A673 (cell line): ENCODE measurements at regions of chr5 and their contacts with region 1.

Region 1: DNA sequence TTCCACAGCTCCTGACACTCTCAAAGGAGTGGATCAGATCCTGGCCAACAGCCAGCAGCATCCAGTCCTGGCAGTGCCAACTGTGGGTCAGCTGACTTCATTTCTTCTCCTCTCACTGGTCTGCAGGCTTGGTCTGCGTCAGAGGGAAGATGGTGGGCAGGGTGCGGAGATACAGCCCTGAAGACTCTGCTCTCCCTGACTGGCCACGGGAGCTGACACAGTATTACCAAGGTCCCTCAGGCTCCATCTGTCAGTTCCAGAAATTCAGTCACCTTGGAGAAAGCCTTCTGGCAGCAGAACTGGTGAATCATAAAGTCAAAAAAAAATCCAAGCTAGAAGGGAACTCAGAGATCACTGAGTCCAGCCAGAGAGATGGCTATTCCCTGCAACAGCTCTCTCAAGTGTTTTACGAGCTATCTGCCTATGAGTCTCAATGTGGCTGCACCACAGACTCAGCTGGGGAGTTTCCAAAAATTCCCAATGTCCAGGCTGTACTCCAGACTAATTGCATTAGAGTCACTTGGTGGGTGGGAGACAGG is 28.0 kb downstream of the C1QTNF2 start:
- DNase-seq: no peak
- H3K4me3 ChIP-seq: no peak overlapping the region
- H3K27ac ChIP-seq: no peak overlapping the region
- H3K4me1 ChIP-seq: peaks cover 4% of the 10 kb centered on the region
- H3K27me3 ChIP-seq: no peaks in the 10 kb centered on the region
- CTCF ChIP-seq: no peak

Region 2: GRCh38 chr5:160021831-160022446 is 320.5 kb before region 1 on chr5:
- CTCF ChIA-PET with region 1: interaction called, 22 read pairs
- POLR2A ChIA-PET with region 1: no interaction called
- intact Hi-C with region 1: loop called (anchors 1 kb)
- DNase-seq: peak; percentile 74
- H3K4me3 ChIP-seq: no peak overlapping the region
- H3K27ac ChIP-seq: no peak overlapping the region
- H3K4me1 ChIP-seq: peaks cover 31% of the 10 kb centered on the region
- H3K27me3 ChIP-seq: no peaks in the 10 kb centered on the region
- CTCF ChIP-seq: peak; percentile 75

Region 3: DNA sequence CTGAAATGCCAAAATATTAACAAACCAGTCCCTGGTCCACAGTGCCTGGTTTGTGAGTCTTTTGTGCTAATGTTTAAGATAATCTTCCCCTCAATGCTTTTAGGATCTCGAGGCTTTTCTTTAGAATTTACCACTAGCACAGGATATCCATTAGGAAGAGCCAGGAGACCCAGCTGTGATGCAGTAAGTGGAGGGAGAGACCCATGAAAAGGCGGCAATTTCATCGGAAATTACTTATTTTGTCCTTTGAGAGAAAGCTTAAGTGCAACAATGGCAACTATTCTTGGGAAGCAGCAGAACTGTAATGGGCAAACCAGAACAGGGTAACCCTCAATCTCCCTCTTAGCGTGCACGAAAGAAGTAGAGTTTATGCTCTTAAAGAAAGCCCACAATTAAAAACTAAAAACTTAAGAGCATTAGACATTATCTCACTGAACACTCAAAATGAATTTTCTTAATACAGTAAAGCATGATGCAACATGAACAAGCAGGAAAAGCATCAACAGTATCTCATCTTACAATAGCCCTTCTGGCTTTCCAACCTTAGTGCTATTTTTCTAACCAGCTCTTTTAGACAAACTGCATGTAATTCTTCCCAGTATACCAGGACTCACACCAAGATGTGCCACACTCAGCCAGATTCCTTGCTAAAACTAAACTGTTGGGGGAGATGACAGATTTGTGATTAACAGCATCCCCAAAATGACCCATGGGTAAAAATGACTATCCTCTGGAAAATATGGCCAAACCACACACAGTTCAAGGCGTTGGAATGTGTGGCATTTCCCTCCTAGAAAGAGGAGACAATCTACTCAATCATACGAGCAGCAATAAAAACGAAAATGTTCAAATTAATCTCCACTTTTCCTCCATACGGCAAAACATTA is 259.6 kb before region 1 on chr5:
- CTCF ChIA-PET with region 1: interaction called, 11 read pairs
- POLR2A ChIA-PET with region 1: no interaction called
- intact Hi-C with region 1: loop called (anchors 1 kb)
- DNase-seq: peak; percentile 32
- H3K4me3 ChIP-seq: no peak overlapping the region
- H3K27ac ChIP-seq: peak overlapping the region; percentile 69
- H3K4me1 ChIP-seq: peaks cover 15% of the 10 kb centered on the region
- H3K27me3 ChIP-seq: no peaks in the 10 kb centered on the region
- CTCF ChIP-seq: no peak

Region 4: DNA sequence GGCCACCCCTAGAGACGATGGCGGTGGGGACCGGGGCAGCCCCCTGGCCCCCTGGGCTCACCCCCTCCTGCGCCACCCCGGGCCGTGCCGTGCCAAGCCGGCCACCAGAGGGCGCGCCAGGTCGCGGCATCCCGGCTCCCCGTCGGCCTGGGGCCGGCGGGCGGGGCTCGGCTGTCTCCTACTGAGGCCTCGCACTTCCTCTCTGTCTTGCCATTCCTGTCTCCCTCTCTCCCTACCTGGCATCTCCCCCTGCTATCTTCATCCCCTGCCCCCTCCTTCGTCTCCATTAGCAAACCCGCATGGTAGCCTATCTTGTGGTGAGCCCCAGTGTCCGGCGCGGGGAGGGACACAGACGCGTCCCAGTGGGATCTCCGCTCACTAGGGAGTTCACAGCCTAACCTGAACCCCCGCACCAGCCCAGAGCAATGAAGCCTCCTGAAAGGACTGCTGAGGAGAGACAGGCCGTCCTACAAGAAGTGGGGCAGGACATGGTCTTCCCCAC is 143.0 kb before region 1 on chr5:
- CTCF ChIA-PET with region 1: no interaction called
- POLR2A ChIA-PET with region 1: interaction called, 7 read pairs
- intact Hi-C with region 1: loop called (anchors 1 kb)
- DNase-seq: peak; percentile 65
- H3K4me3 ChIP-seq: no peak overlapping the region
- H3K27ac ChIP-seq: peak overlapping the region; percentile 82
- H3K4me1 ChIP-seq: peaks cover 31% of the 10 kb centered on the region
- H3K27me3 ChIP-seq: no peaks in the 10 kb centered on the region
- CTCF ChIP-seq: peak; percentile 67

Region 5: DNA sequence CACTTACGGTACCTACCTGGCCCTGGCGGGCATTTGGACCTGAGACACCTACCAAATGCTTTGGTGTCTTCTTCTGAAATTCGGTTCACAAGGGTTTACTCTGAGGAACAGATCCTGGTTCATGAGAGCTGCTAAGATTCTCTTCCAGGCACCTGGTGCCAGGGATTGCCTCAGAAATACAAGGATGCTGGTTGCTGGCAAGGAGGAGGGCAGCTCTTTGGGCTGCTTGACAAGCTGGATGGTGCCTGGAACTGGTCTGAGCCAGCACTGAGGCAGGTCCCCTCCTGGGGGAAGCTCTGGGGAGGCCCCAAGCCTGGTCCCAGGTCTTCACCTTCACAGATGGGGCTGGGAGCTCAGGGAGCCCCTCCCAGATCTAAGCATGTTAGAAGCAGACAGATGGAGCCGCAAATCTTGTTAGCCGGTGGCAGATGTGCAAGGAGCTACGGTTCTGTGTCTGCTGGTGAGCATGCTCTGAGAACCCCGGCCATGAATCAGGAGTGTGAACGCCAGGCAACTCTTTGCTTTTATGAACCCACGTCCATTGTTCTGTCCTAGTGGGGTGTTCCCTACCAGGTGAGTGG is 96.9 kb before region 1 on chr5:
- CTCF ChIA-PET with region 1: interaction called, 3 read pairs
- POLR2A ChIA-PET with region 1: no interaction called
- intact Hi-C with region 1: loop called (anchors 2 kb)
- DNase-seq: no peak
- H3K4me3 ChIP-seq: no peak overlapping the region
- H3K27ac ChIP-seq: no peak overlapping the region
- H3K4me1 ChIP-seq: no peaks in the 10 kb centered on the region
- H3K27me3 ChIP-seq: no peaks in the 10 kb centered on the region
- CTCF ChIP-seq: no peak